PC-3 (cell line): ENCODE measurements at regions of chr22 and their contacts with region 1.

Region 1: DNA sequence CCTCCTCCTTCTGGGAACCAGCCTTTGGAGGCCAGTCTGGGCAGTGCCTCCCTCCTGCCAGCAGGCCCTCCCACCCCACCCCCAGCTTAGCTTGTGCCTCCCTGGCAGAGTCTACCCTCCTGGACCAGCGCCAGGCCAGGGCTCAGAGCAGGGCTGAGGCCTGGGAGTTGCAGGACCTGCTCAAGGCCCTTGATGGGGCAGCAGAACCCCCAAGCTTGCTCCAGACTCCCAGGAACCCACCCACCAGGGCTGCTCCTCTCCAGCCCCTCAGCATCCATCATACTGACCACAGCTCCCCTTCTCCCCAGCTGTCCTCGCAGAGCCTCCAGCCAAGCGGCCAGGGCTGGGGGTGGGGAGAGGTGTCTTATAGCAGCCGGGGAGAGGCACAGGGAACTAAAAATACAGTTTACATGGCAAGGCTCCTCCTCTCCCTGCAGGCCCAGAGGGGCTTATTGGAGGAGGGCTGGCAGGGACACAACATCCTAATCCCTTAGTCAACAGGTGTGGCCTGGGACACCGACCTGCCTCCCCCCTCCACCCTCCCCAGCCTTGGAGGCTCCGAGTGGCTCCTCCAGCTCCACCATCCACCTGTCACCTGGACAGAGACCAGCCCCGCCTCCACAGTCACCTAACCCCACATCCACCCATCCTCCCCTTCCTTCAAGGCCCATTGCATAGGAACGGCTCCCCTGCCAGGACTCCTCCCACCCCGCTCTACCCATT is 5.2 kb upstream of the MB start:
- DNase-seq: peak; percentile 92
- ATAC-seq: peak; percentile 65
- H3K4me3 ChIP-seq: peak overlapping the region; percentile 29; the same call in 1 of the 2 replicates
- H3K27ac ChIP-seq: peak overlapping the region; percentile 85
- H3K4me1 ChIP-seq: peaks cover 25% of the 10 kb centered on the region
- H3K27me3 ChIP-seq: no peaks in the 10 kb centered on the region
- CTCF ChIP-seq: no peak

Region 2: GRCh38 chr22:35589071-35589952 is 33.0 kb before region 1 on chr22:
- CTCF ChIA-PET with region 1: no interaction called
- POLR2A ChIA-PET with region 1: no interaction called
- intact Hi-C with region 1: loop called (anchors 2 kb)
- DNase-seq: peak; percentile 95
- ATAC-seq: peak; percentile 92
- H3K4me3 ChIP-seq: no peak overlapping the region
- H3K27ac ChIP-seq: peak overlapping the region; percentile 70
- H3K4me1 ChIP-seq: peaks cover 42% of the 10 kb centered on the region
- H3K27me3 ChIP-seq: no peaks in the 10 kb centered on the region
- CTCF ChIP-seq: 0 out of 2 replicates have a peak, but pooled peaks have one; percentile 12

Region 3: GRCh38 chr22:35638410-35638809 is 16.1 kb after region 1 on chr22:
- CTCF ChIA-PET with region 1: no interaction called
- POLR2A ChIA-PET with region 1: no interaction called
- intact Hi-C with region 1: no loop called
- DNase-seq: no peak
- ATAC-seq: no peak
- H3K4me3 ChIP-seq: no peak overlapping the region
- H3K27ac ChIP-seq: no peak overlapping the region
- H3K4me1 ChIP-seq: no peaks in the 10 kb centered on the region
- H3K27me3 ChIP-seq: no peaks in the 10 kb centered on the region
- CTCF ChIP-seq: no peak

Region 4: DNA sequence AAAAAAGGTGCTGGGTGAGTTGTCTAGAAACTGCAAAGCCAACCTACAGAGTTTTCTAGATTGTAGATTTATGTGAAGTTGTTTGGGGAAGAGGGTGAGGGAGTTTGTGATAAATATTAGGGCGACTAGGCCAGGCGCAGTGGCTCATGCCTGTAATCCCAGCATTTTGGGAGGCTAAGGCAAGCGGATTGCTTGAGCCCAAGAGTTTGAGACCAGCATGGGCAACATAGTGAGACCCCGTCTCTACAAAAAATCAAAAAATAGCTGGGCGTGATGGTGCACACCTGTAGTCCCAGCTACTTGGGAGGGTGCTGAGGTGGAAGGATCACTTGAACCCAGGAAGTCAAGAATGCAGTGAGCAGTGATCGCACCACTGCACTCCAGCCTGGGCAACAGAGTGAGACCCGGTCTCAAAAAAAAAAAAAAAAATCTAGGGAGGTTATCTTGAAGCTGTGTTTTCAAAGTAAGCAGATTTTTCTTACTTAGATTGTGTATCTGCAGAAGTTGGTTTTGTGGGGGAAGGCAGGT is 26.7 kb after region 1 on chr22:
- CTCF ChIA-PET with region 1: no interaction called
- POLR2A ChIA-PET with region 1: no interaction called
- intact Hi-C with region 1: no loop called
- DNase-seq: no peak
- ATAC-seq: no peak
- H3K4me3 ChIP-seq: peak overlapping the region; percentile 72
- H3K27ac ChIP-seq: 0 out of 2 replicates have a peak overlapping the region, but pooled peaks have one; percentile 59
- H3K4me1 ChIP-seq: peaks cover 17% of the 10 kb centered on the region
- H3K27me3 ChIP-seq: no peaks in the 10 kb centered on the region
- CTCF ChIP-seq: no peak